GM10248 (cell line): ENCODE measurements at regions of chr6 and their contacts with region 1.

Region 1: DNA sequence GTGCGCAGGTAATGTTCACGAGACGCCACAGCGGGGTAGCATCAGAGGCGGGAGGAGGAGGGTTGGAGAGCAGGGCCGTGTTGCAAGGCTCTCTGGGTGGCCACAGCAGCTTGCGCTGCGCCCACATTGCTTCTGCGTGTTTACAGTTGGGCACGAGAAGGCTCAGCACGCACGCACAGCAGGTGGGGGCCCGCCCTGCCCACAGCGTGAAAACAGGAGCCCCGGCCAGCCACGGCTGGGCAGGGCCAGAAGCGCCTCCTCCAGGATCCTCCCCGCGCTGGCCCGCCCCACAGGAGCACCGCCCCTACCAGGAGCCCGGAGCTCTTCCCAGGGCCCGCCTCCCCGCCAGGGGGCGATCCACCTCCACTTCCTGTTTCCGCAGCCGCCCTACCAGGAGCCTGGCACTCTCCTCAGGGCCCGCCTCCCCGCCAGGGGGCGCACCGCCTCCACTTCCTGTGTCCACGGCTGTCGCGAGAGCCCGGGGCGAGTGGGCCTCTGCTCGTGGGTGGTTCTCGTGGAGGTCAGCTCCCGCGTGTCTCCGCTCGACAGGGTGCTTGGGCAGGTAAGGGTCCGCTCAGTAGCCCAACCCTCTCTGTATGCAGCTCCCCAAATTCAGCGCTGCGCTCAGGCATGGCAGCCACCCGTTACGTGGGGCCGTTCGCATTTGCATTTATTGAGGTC is at the start of gene FAM50B:
- DNase-seq: peak; percentile 91
- CTCF ChIP-seq: peak; percentile 81

Region 2: DNA sequence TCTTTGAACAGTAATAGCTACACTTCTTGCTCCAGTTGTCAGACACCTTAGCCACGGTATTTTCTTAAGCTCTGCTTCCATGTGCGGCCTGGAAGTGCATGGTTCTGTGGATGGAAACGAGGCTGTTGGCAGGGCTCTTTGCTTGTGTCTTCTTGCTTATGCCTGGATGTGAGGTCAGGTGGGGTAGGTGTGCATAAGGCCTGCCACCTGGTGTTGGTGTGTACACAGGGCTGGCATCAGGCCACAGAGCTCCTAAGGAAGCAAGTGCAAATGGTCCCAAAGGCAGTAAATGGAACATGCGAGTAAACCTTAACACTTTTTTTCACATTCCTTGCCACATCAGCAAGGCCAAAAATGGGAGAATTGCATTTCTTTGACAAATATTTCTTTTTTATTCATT is 1445.5 kb before region 1 on chr6:
- CTCF ChIA-PET with region 1: no interaction called
- POLR2A ChIA-PET with region 1: no interaction called
- DNase-seq: no peak
- CTCF ChIP-seq: no peak

Region 3: GRCh38 chr6:3797231-3798054 is 51.6 kb before region 1 on chr6:
- CTCF ChIA-PET with region 1: interaction called, 13 read pairs
- POLR2A ChIA-PET with region 1: no interaction called
- DNase-seq: no peak
- CTCF ChIP-seq: no peak

Region 4: GRCh38 chr6:3831761-3832530 is 17.1 kb before region 1 on chr6:
- CTCF ChIA-PET with region 1: interaction called, 21 read pairs
- POLR2A ChIA-PET with region 1: no interaction called
- DNase-seq: no peak
- CTCF ChIP-seq: no peak

Region 5: DNA sequence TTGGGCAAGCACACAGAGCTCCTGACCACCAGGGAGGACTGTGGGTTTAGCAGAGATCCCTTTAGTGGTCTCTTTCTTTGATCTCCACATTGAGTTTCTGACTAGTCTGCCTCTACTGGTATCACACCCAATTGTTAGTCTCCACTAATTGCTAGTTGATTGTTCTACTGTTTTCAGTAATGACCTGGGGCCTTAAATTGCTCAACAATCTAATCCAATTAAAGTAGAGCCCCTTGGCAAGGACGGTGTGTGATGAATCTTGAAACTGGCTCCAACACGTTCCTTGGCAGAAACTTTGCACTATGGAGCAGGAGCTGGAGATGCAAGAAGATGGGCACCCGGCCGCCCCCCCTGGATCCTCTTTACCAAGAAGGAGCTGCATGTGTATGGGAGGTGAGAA is 12.4 kb after region 1 on chr6:
- CTCF ChIA-PET with region 1: interaction called, 32 read pairs
- POLR2A ChIA-PET with region 1: no interaction called
- DNase-seq: no peak
- CTCF ChIP-seq: no peak

Region 6: GRCh38 chr6:3867641-3868502 is 18.8 kb after region 1 on chr6:
- CTCF ChIA-PET with region 1: interaction called, 32 read pairs
- POLR2A ChIA-PET with region 1: no interaction called
- DNase-seq: no peak
- CTCF ChIP-seq: no peak

Region 7: DNA sequence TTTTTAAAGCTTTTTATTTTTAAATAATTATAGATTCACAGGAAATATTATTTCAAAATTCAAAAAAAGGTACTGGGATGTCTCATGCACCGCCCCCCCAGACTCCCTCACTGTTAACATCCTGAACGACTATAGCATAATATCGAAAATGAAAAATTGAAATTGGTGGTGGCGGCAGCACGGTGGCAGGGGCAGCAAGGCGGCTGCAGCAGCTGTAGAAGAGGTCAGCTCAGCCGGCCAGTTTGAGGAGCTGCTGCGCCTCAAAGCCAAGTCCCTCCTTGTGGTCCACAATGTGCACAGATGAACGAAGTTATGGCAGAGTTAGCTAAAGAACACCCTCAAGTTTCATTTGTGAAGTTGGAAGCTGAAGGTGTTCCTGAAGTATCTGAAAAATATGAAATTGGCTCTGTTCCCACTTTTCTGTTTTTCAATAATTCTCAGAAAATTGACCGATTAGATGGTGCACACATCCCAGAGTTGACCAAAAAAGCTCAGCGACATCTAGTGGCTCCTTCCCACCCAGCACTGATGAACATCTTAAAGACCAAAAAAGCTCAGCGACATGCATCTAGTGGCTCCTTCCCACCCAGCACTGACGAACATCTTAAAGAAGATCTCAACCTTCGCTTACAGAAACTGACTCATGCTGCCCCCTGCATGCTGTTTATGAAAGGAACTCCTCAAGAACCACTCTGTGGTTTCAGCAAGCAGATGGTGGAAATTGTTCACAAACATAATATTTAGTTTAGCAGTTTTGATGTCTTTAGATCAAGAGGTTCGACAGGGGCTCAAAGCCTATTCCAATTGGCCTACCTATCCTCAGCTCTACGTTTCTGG is 129.0 kb after region 1 on chr6:
- CTCF ChIA-PET with region 1: interaction called, 17 read pairs
- POLR2A ChIA-PET with region 1: no interaction called
- DNase-seq: peak; percentile 41
- CTCF ChIP-seq: peak; percentile 63

Region 8: GRCh38 chr6:4021133-4021853 is 172.2 kb after region 1 on chr6:
- CTCF ChIA-PET with region 1: interaction called, 18 read pairs
- POLR2A ChIA-PET with region 1: interaction called, 3 read pairs
- DNase-seq: peak; percentile 83
- CTCF ChIP-seq: peak; percentile 58